Activated CD4-positive, alpha-beta T cell treated with anti-CD3 and anti-CD28 coated beads for 36 hours (primary cell): ENCODE measurements at regions of chr10 and their contacts with region 1.

Region 1: GRCh38 chr10:69237528-69238159 is 17.5 kb downstream of the HKDC1 start:
- DNase-seq: peak; percentile 94
- ATAC-seq: peak; percentile 99
- H3K4me3 Mint-ChIP-seq: no peak overlapping the region
- H3K27ac Mint-ChIP-seq: no peak overlapping the region
- H3K4me1 Mint-ChIP-seq: peaks cover 22% of the 10 kb centered on the region
- H3K27me3 Mint-ChIP-seq: no peaks in the 10 kb centered on the region

Region 2: GRCh38 chr10:68781613-68782574 is 455.8 kb before region 1 on chr10:
- CTCF ChIA-PET with region 1: no interaction called
- POLR2A ChIA-PET with region 1: no interaction called
- intact Hi-C with region 1: no loop called
- DNase-seq: no peak
- ATAC-seq: no peak
- H3K4me3 Mint-ChIP-seq: no peak overlapping the region
- H3K27ac Mint-ChIP-seq: peak overlapping the region; percentile 58
- H3K4me1 Mint-ChIP-seq: no peaks in the 10 kb centered on the region
- H3K27me3 Mint-ChIP-seq: no peaks in the 10 kb centered on the region

Region 3: GRCh38 chr10:69360485-69361324 is 123.1 kb after region 1 on chr10:
- CTCF ChIA-PET with region 1: interaction called, 3 read pairs
- POLR2A ChIA-PET with region 1: interaction called, 13 read pairs
- intact Hi-C with region 1: no loop called
- DNase-seq: no peak
- ATAC-seq: no peak
- H3K4me3 Mint-ChIP-seq: no peak overlapping the region
- H3K27ac Mint-ChIP-seq: no peak overlapping the region
- H3K4me1 Mint-ChIP-seq: peaks cover 65% of the 10 kb centered on the region
- H3K27me3 Mint-ChIP-seq: no peaks in the 10 kb centered on the region

Region 4: GRCh38 chr10:69392481-69393000 is 154.9 kb after region 1 on chr10:
- CTCF ChIA-PET with region 1: interaction called, 106 read pairs
- POLR2A ChIA-PET with region 1: interaction called, 3 read pairs
- intact Hi-C with region 1: loop called (anchors 1 kb)
- DNase-seq: peak; percentile 89
- ATAC-seq: peak; percentile 95
- H3K4me3 Mint-ChIP-seq: no peak overlapping the region
- H3K27ac Mint-ChIP-seq: peak overlapping the region; percentile 67
- H3K4me1 Mint-ChIP-seq: peaks cover 19% of the 10 kb centered on the region
- H3K27me3 Mint-ChIP-seq: no peaks in the 10 kb centered on the region

Region 5: DNA sequence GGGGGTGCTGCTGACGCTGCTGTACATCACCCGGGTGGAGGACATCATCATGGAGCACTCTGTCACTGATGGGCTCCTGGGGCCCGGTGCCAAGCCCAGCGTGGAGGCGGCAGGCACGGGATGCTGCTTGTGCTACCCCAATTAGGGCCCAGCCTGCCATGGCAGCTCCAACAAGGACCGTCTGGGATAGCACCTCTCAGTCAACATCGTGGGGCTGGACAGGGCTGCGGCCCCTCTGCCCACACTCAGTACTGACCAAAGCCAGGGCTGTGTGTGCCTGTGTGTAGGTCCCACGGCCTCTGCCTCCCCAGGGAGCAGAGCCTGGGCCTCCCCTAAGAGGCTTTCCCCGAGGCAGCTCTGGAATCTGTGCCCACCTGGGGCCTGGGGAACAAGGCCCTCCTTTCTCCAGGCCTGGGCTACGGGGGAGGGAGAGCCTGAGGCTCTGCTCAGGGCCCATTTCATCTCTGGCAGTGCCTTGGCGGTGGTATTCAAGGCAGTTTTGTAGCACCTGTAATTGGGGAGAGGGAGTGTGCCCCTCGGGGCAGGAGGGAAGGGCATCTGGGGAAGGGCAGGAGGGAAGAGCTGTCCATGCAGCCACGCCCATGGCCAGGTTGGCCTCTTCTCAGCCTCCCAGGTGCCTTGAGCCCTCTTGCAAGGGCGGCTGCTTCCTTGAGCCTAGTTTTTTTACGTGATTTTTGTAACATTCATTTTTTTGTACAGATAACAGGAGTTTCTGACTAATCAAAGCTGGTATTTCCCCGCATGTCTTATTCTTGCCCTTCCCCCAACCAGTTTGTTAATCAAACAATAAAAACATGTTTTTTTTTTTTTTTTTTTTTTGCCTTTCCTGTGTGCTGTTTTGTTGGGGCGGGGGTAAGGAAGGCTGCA is 269.4 kb after region 1 on chr10:
- CTCF ChIA-PET with region 1: interaction called, 6 read pairs
- POLR2A ChIA-PET with region 1: no interaction called
- intact Hi-C with region 1: loop called (anchors 1 kb)
- DNase-seq: peak; percentile 17
- ATAC-seq: peak; percentile 33
- H3K4me3 Mint-ChIP-seq: peak overlapping the region; percentile 60
- H3K27ac Mint-ChIP-seq: peak overlapping the region; percentile 89
- H3K4me1 Mint-ChIP-seq: peaks cover 11% of the 10 kb centered on the region
- H3K27me3 Mint-ChIP-seq: no peaks in the 10 kb centered on the region